ENCODE measurements at regions of chr13 and their contacts with region 1.

Region 1: GRCh38 chr13:50911937-50912795 is 2.6 kb downstream of the RNASEH2B start:
- DNase-seq: peak; percentile 58 to 79
- ATAC-seq: peak; percentile 14 to 49; a peak in 3 of 6 replicates
- H3K4me3 ChIP-seq: no peak overlapping the region
- H3K27ac ChIP-seq: no peak overlapping the region
- H3K4me1 ChIP-seq: peaks cover 18% of the 10 kb centered on the region
- CTCF ChIP-seq: peak; percentile 67
- EP300 ChIP-seq: no peak
- POLR2A ChIP-seq: no peak
- RAD21 ChIP-seq: peak; percentile 69 to 76

Region 2: DNA sequence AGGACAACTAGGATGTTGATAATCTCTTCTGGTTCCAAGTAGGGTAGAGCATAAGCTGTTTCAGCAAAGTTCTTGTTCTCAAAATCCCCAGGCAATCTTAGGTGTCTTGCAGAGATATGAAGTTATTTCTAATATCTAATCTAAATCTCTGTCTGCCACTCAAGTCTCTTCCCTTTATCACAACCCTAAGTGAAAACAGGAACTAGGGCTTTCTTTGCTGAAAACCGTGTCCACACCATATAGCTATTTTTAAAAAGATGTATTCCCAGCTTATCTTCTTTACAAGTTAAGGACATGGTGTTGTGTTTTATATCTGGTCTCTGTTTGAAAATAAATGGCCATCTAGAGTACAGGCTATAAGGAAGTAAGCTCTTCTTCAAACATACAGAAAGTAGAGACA is 13.8 kb before region 1 on chr13:
- CTCF ChIA-PET with region 1: interaction called, 10 read pairs
- POLR2A ChIA-PET with region 1: no interaction called
- DNase-seq: no peak
- ATAC-seq: no peak
- H3K4me3 ChIP-seq: no peak overlapping the region
- H3K27ac ChIP-seq: no peak overlapping the region
- H3K4me1 ChIP-seq: no peaks in the 10 kb centered on the region
- CTCF ChIP-seq: no peak
- EP300 ChIP-seq: no peak
- POLR2A ChIP-seq: no peak
- RAD21 ChIP-seq: no peak